ENCODE measurements at regions of chr2 and their contacts with region 1.

Region 1: GRCh38 chr2:47272031-47272864 is 117.1 kb upstream of the STPG4 start:
- DNase-seq: peak; percentile 81 to 90 (median 89)
- ATAC-seq: peak; percentile 85
- H3K4me3 ChIP-seq: no peak overlapping the region
- H3K4me1 ChIP-seq: peaks cover 35% of the 10 kb centered on the region
- CTCF ChIP-seq: peak; percentile 97

Region 2: GRCh38 chr2:47189635-47190034 is 82.6 kb before region 1 on chr2:
- intact Hi-C with region 1: loop called in 1 of 2 experiments (anchors 10 kb)
- DNase-seq: no peak
- ATAC-seq: peak; percentile 76
- H3K4me3 ChIP-seq: no peak overlapping the region
- H3K4me1 ChIP-seq: peaks cover 5% of the 10 kb centered on the region
- CTCF ChIP-seq: no peak

Region 3: GRCh38 chr2:47309952-47310800 is 37.9 kb after region 1 on chr2:
- intact Hi-C with region 1: loop called in 1 of 2 experiments (anchors 5 kb)
- DNase-seq: peak; percentile 66 to 82 (median 72)
- ATAC-seq: peak; percentile 77
- H3K4me3 ChIP-seq: no peak overlapping the region
- H3K4me1 ChIP-seq: peaks cover 29% of the 10 kb centered on the region
- CTCF ChIP-seq: no peak